ENCODE measurements at regions of chr1 and their contacts with region 1.

Region 1: GRCh38 chr1:234638832-234639799 is 29.1 kb upstream of the IRF2BP2 start:
- DNase-seq: peak; percentile 90 to 93
- H3K4me3 ChIP-seq: no peak overlapping the region
- H3K4me3 Mint-ChIP-seq: peak overlapping the region; percentile 59
- H3K27ac Mint-ChIP-seq: peak overlapping the region; percentile 82
- H3K4me1 ChIP-seq: peaks cover 57% of the 10 kb centered on the region
- H3K4me1 Mint-ChIP-seq: peaks cover 42% of the 10 kb centered on the region
- H3K27me3 ChIP-seq: no peaks in the 10 kb centered on the region
- H3K27me3 Mint-ChIP-seq: no peaks in the 10 kb centered on the region
- CTCF ChIP-seq: no peak

Region 2: DNA sequence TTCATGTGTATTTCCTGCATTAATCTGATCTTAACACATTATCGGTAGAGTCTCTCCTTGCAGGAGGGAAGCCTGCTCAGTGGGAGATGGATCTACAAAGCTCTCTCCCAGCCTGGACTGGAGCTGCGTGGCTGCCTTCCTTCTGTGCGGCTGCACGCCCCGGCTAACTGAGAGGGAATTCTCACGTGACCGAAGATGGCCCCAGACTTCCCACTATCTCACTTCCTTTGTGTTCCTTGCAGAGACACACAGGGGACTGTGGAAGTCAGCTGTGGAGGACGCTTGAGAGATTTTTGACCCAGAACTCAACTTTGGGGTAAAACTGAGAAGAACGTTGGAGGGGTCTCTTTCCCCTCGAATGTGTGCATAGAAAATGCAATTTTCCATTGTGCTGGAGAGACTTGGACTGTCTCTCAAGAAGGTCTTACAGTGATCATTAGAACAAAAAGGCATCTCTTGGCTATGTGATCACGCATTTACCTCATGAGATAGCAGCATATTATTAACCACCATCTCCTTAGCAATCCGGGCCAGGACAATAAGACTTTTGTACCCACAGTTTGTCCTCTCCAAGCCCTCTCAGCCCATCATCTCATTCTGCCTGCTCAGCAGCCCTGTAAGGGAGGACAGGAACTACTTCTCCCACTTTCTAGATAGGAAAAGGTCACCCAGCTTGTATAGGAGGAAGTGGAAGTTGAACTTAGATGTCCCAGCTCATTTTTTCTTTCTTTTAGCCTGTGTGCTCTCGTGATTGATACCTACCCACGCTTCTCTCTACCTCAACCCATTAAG is 110.8 kb before region 1 on chr1:
- CTCF ChIA-PET with region 1: no interaction called
- POLR2A ChIA-PET with region 1: no interaction called
- intact Hi-C with region 1: no loop called
- DNase-seq: no peak
- H3K4me3 ChIP-seq: no peak overlapping the region
- H3K4me3 Mint-ChIP-seq: no peak overlapping the region
- H3K27ac Mint-ChIP-seq: no peak overlapping the region
- H3K4me1 ChIP-seq: peaks cover 18% of the 10 kb centered on the region
- H3K4me1 Mint-ChIP-seq: peaks cover 27% of the 10 kb centered on the region
- H3K27me3 ChIP-seq: no peaks in the 10 kb centered on the region
- H3K27me3 Mint-ChIP-seq: no peaks in the 10 kb centered on the region
- CTCF ChIP-seq: no peak

Region 3: GRCh38 chr1:234620272-234621126 is 18.6 kb before region 1 on chr1:
- CTCF ChIA-PET with region 1: no interaction called
- POLR2A ChIA-PET with region 1: interaction called, 5 read pairs
- intact Hi-C with region 1: loop called (anchors 1 kb)
- DNase-seq: no peak
- H3K4me3 ChIP-seq: no peak overlapping the region
- H3K4me3 Mint-ChIP-seq: peak overlapping the region; percentile 55
- H3K27ac Mint-ChIP-seq: peak overlapping the region; percentile 86
- H3K4me1 ChIP-seq: peaks cover 78% of the 10 kb centered on the region
- H3K4me1 Mint-ChIP-seq: peaks cover 67% of the 10 kb centered on the region
- H3K27me3 ChIP-seq: no peaks in the 10 kb centered on the region
- H3K27me3 Mint-ChIP-seq: no peaks in the 10 kb centered on the region
- CTCF ChIP-seq: no peak

Region 4: DNA sequence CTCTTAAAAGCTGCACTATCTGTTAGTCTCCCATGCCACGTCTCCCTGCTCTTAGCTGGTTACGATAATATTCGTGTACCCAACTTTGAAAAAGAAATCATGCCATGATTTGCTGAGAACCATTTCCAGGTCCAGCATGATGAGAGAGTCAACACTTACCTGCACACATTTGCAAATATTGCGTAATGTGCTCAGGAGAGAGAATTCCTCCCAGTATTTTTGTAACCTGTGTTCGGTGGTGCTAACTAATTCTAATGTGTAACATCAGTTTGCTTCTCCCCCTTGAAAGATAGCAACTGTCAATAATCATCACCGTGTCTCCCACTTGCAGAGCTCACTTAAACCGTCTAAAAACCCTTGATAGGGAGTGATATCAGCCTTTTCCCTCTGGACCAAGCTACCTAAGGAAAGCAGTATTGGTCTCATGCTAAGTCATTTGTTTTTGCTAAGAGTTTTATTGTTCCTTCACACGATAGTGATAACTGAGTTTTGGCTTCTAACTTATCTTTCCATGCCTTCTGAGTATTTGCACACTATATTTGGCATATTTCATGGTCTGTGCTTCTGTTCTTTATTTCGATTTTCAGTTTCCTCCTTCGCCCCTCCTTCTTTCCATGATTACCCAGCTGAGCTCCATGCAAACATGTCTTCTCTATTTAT is 32.0 kb after region 1 on chr1:
- CTCF ChIA-PET with region 1: no interaction called
- POLR2A ChIA-PET with region 1: no interaction called
- intact Hi-C with region 1: loop called (anchors 1 kb)
- DNase-seq: peak in 1 of 2 experiments; percentile 39
- H3K4me3 ChIP-seq: no peak overlapping the region
- H3K4me3 Mint-ChIP-seq: peak overlapping the region; percentile 51
- H3K27ac Mint-ChIP-seq: peak overlapping the region; percentile 74
- H3K4me1 ChIP-seq: peaks cover 27% of the 10 kb centered on the region
- H3K4me1 Mint-ChIP-seq: peaks cover 32% of the 10 kb centered on the region
- H3K27me3 ChIP-seq: no peaks in the 10 kb centered on the region
- H3K27me3 Mint-ChIP-seq: no peaks in the 10 kb centered on the region
- CTCF ChIP-seq: no peak

Region 5: DNA sequence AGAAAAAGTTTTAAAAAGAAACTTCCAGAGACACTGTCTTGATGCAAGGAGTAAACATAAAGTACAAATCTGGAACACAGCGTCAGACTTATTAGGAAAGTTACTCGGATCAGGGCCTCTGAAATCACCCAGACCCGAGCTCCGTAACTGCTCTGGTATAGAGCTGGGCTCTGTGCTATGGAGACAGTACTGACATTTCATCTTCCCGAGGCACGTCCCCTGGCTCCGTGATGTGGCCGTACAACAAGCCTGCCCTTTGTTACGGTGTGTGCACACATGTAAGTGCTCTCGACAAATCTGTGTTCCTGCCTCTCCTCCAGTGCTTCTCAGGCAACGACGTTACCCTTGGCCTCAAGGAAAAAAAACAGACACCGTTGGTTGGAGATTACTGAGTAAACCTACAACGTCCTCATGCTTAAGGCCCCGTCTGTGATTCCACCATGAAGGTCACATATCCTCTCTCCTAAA is 77.8 kb after region 1 on chr1:
- CTCF ChIA-PET with region 1: interaction called, 5 read pairs
- POLR2A ChIA-PET with region 1: no interaction called
- intact Hi-C with region 1: loop called (anchors 1 kb)
- DNase-seq: peak in 1 of 2 experiments; percentile 49
- H3K4me3 ChIP-seq: no peak overlapping the region
- H3K4me3 Mint-ChIP-seq: peak overlapping the region; percentile 52
- H3K27ac Mint-ChIP-seq: peak overlapping the region; percentile 86
- H3K4me1 ChIP-seq: peaks cover 90% of the 10 kb centered on the region
- H3K4me1 Mint-ChIP-seq: peaks cover 80% of the 10 kb centered on the region
- H3K27me3 ChIP-seq: no peaks in the 10 kb centered on the region
- H3K27me3 Mint-ChIP-seq: no peaks in the 10 kb centered on the region
- CTCF ChIP-seq: no peak

Measured in Caco-2 (cell line).